ENCODE measurements at regions of chr12 and their contacts with region 1.

Region 1: DNA sequence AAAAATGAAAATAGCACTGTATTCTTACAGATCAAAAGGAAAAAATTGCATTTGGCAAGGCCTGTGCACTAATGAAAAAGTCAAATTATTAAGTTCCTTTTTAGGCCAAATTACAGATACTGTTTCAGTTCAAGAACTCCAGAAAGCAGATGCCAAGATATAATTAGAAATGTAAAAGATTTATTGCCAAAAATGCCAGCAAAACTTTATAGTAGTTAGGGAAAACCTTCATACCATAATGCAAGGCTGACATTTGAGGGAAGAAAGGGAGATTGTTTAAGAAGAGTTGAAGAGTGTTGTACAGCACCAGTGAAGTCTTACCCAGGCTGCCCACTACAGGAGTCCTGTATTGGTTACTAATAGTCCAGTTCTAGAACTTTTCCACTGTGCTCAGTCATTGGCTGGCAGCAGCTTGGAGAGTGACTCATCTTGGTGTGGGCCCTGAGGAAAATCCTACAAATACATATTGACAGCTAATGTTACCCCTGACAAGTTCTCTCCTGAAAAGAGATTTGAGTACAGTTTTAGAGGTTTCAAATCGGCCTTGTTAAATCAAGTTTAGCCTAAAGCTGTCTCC is 600.4 kb downstream of the C12orf50 start:
- DNase-seq: peak; percentile 85
- H3K4me3 ChIP-seq: no peak overlapping the region
- H3K27ac ChIP-seq: peak overlapping the region; percentile 84
- H3K4me1 ChIP-seq: peaks cover 28% of the 10 kb centered on the region
- H3K27me3 ChIP-seq: no peaks in the 10 kb centered on the region
- CTCF ChIP-seq: no peak

Region 2: DNA sequence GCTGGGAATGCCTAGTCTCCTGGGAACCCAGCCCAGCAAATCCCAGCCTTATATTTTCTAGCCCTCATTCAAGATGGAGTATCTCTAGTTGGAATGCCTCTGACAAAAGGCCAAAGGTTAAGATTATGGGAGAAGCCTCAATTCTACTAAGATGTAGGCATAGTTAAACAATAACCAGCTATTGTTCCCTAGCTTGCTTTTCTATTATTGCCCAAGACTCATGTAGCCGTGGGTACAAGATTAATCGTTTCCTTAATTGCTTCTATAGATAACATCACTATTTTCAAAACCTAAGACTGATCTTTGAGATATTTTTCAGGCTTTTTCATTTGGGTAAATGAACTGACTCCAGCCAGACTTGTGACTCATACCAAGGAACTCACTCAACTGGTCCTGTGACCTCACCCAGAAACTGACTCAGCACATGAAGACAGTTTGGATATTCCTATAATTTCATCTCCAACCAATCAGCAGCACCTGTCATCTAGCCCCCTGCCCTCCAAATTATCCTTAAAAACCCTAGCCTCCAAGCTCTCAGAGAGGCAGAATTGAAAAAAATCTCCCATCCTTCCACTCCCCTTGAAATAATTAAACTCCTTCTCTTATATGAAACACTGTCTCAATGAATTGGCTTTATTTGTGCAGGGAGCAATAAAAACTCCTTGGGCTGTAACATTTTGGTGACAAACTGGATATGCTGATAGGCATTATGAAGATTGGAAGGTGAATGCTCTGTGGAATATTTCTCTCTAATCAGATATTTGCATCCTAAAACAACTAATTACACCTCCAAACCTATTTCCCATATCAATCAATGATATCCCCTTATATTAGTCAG is 11.4 kb after region 1 on chr12:
- CTCF ChIA-PET with region 1: interaction called, 5 read pairs
- dilution Hi-C with region 1: no loop called
- in situ Hi-C with region 1: no loop called
- intact Hi-C with region 1: loop called (anchors 2 kb)
- DNase-seq: peak; percentile 98
- H3K4me3 ChIP-seq: no peak overlapping the region
- H3K27ac ChIP-seq: peak overlapping the region; percentile 93
- H3K4me1 ChIP-seq: peaks cover 26% of the 10 kb centered on the region
- H3K27me3 ChIP-seq: no peaks in the 10 kb centered on the region
- CTCF ChIP-seq: no peak

Region 3: GRCh38 chr12:87467936-87468335 is 39.1 kb after region 1 on chr12:
- CTCF ChIA-PET with region 1: no interaction called
- dilution Hi-C with region 1: no loop called
- in situ Hi-C with region 1: no loop called
- intact Hi-C with region 1: no loop called
- DNase-seq: no peak
- H3K4me3 ChIP-seq: no peak overlapping the region
- H3K27ac ChIP-seq: no peak overlapping the region
- H3K4me1 ChIP-seq: no peaks in the 10 kb centered on the region
- H3K27me3 ChIP-seq: no peaks in the 10 kb centered on the region
- CTCF ChIP-seq: no peak

Region 4: GRCh38 chr12:87827638-87828264 is 399.0 kb after region 1 on chr12:
- CTCF ChIA-PET with region 1: no interaction called
- dilution Hi-C with region 1: no loop called
- in situ Hi-C with region 1: no loop called
- intact Hi-C with region 1: loop called (anchors 10 kb)
- DNase-seq: peak; percentile 76
- H3K4me3 ChIP-seq: no peak overlapping the region
- H3K27ac ChIP-seq: peak overlapping the region; percentile 19
- H3K4me1 ChIP-seq: peaks cover 17% of the 10 kb centered on the region
- H3K27me3 ChIP-seq: no peaks in the 10 kb centered on the region
- CTCF ChIP-seq: no peak

Measured in mammary epithelial cell (primary cell).